SK-N-SH (cell line): ENCODE measurements at regions of chr21 and their contacts with region 1.

Region 1: GRCh38 chr21:44304877-44305293 is 5.0 kb downstream of the PFKL start:
- DNase-seq: peak; percentile 91
- H3K4me3 ChIP-seq: no peak overlapping the region
- H3K27ac ChIP-seq: no peak overlapping the region
- H3K4me1 ChIP-seq: peaks cover 0 to 16% of the 10 kb centered on the region in 2 experiments; a peak in 1 of 4 replicates
- H3K27me3 ChIP-seq: no peaks in the 10 kb centered on the region
- CTCF ChIP-seq: peak; percentile 75
- EP300 ChIP-seq: no peak
- RAD21 ChIP-seq: peak; percentile 61

Region 2: DNA sequence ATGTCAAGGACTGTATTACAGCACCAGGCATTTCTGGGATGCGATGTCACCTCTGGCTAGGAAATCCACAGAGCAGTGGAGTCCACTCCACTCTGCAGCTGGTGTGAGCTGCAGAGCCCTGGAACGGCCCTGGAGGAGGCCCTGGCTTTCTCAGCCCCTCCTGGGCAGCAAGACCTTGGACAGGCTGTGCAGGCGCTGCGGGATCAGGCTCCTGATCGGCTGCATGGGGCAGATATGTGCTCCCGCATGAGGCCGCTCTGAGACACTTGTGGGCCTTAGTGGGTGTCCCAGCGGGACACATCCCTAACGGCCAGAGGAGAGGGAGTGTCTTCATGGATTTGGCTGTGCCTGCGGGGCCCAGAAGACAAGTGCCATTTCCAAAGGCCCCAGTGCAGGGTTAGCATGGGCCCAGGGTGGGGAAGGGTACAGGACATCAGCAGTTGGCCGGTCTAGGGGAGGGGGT is 49.3 kb before region 1 on chr21:
- CTCF ChIA-PET with region 1: no interaction called
- POLR2A ChIA-PET with region 1: no interaction called
- DNase-seq: no peak
- H3K4me3 ChIP-seq: no peak overlapping the region
- H3K27ac ChIP-seq: no peak overlapping the region
- H3K4me1 ChIP-seq: no peaks in the 10 kb centered on the region
- H3K27me3 ChIP-seq: no peaks in the 10 kb centered on the region
- CTCF ChIP-seq: no peak
- EP300 ChIP-seq: no peak
- RAD21 ChIP-seq: no peak

Region 3: DNA sequence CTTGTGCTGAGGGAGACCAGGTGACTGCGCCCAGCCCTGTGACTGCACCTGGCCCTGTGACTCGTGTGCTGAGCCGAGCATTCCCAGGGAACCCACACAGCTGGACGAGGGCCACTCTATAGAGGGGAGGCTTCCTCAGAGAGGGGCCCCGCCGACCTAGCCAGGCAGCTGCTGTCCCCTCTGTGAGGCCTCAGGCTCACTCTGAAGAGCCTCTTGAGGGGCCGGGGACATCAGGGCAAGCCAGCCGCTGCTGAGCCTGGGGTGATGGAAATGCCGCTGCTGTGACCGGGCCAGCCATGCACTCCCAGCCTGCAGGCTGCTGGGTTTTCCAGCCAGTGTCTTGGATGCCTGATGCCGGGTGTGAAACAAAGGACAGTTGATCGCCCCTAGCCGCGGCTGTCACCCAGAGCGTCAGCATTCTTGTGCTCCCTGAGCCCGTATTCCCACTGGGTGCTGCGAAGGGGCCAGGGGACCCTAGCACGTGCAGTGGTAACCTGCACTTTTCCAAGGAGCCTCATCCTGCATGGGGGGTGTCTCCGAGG is 12.4 kb after region 1 on chr21:
- CTCF ChIA-PET with region 1: interaction called, 11 read pairs
- POLR2A ChIA-PET with region 1: no interaction called
- DNase-seq: no peak
- H3K4me3 ChIP-seq: no peak overlapping the region
- H3K27ac ChIP-seq: no peak overlapping the region
- H3K4me1 ChIP-seq: no peaks in the 10 kb centered on the region
- H3K27me3 ChIP-seq: no peaks in the 10 kb centered on the region
- CTCF ChIP-seq: no peak
- EP300 ChIP-seq: no peak
- RAD21 ChIP-seq: no peak

Region 4: DNA sequence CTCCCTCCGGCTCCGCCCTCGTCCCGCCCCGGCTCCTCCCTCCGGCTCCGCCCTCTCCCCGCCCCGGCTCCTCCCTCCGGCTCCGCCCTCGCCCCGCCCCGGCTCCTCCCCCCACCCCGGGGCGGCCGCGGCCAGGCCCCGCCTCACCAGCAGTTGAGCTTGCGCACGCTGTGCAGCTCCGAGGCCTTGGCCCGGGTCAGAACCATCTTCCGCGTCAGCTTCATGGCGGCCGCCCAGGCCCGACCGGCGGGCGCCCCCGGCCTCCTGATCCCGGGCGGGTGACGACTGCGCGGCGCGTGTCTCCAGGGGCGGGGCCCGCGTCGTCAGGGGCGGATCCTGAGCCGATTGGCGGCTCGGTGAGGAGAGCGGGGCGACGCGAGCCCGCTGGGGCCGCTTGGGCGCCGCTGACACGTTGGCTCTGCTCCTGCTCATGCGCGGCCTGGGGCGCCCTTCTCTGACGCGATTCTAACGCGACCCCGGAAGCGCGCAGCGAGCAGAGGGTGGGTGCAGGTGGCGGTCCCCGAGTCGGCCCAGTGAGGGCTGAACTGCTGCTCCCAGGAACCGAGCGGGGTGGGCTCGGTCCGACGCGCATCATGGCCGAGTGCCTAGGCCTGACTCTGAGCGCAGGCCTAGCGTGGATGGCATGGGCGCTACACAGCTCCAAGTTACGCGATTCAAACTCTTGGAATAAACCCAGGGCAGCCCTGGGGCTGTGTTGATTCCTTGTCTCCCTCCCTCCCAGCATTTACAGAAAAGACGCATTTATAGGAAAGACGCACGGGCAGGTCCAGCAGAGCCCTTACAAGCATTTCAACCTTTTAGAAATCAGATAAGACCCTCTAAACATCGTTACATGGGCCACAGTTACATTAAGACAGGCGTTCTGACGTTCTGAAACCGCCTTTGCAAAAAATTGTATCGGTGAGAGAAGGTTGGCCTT is 34.4 kb after region 1 on chr21 and contains the start of gene CFAP410:
- CTCF ChIA-PET with region 1: interaction called, 12 read pairs
- POLR2A ChIA-PET with region 1: interaction called, 3 read pairs
- DNase-seq: peak; percentile 98
- H3K4me3 ChIP-seq: peak within 1 kb of the TSS; percentile 72 to 76
- H3K27ac ChIP-seq: peak within 1 kb of the TSS; percentile 86 to 96
- H3K4me1 ChIP-seq: peaks cover 6 to 10% of the 10 kb centered on the region in 2 experiments; a peak in 2 of 4 replicates
- H3K27me3 ChIP-seq: no peaks in the 10 kb centered on the region
- CTCF ChIP-seq: no peak
- EP300 ChIP-seq: no peak
- RAD21 ChIP-seq: no peak
- polyA plus RNA-seq, gene CFAP410: 18.0 and 19.2 TPM in 2 replicates